Left colon (tissue), 2 donors: ENCODE measurements at regions of chr1 and their contacts with region 1.

Region 1: DNA sequence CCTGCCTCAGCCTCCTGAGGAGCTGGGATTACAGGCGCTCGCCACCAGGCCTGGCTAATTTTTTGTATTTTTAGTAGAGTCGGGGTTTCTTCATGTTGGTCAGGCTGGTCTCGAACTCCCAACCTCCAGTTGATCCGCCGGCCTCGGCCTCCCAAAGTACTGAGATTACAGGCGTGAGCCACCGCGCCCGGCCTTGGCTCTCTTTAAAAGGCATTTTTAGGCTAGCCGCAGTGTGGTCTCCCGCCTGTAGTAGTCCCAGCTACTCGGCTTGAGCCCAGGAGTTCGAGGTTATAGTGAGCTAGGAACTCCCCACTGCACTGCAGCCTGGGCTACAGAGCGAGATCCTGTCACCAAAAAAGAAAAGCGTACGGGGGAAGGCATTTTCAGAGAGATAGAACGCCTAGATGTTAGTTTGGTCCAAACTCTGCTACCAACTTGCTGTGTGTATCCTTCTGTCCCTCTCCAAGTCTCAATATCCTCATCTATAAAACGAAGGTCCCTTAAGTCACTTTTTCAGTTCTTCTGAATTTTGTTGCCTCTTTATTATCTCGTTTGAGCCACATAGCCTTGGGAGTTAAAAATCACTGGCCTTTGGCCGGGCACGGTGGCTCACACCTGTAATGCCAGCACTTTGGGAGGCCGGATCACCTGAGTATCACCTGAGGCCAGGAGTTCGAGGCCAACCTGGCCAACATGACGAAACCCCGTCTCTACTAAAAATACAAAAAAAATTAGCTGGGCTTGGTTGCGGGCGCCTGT is 734 bp downstream of the MED18 start:
- DNase-seq: peak in 1 of 2 donors; percentile 56
- ATAC-seq: peak; percentile 39

Region 2: DNA sequence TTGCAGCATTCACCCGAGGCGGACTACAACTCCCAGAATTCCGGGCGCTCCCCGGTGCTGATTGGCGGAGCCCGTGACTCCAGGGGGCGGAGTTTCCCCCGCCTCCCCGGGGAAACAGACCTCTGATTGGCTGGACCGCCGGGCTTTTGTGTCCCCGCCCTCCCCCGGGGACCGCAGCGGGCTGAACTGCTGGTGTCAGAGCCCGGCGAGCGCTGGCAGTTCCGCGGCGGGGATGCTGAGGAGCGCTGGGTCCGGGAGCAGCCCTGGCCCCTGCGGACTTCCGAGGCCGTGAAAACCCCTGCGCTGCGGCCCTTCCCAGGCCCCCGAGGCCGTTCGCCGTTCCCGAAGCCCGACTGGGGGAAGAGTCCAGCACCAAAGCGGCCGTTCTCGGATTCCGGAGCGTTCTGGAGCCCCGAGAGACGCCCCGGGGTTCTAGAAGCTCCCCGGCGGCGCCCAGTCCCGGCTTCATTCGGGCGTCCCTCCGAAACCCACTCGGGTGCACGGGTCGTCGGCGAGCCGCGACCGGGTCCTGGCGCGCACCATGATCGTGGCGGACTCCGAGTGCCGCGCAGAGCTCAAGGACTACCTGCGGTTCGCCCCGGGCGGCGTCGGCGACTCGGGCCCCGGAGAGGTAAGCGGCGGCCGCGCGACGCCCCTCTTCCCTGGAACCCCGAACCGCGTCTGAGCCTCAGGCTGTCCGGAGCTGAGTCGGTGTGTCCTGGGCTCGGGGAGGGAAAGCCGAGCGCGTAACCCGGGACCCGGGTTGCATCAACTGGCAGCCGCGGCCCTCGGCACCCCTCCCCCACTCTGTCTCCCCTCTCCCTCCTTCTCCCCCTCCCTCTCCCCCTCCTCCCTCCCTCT is 70.0 kb before region 1 on chr1 and contains the start of gene SESN2:
- intact Hi-C with region 1: loop called in 1 of 2 experiments (anchors 5 kb)
- DNase-seq: peak; percentile 99
- ATAC-seq: peak; percentile 94
- total RNA-seq, gene SESN2: 34.7 to 40.3 TPM

Region 3: GRCh38 chr1:28417429-28417922 is 87.9 kb after region 1 on chr1:
- intact Hi-C with region 1: no loop called
- DNase-seq: no peak
- ATAC-seq: peak; percentile 67